BJ (cell line): ENCODE measurements at regions of chr1 and their contacts with region 1.

Region 1: GRCh38 chr1:47424336-47424982 is 8.4 kb downstream of the FOXE3 start:
- DNase-seq: no peak
- H3K4me3 ChIP-seq: no peak overlapping the region
- H3K27me3 ChIP-seq: no peaks in the 10 kb centered on the region
- CTCF ChIP-seq: peak; percentile 90

Region 2: DNA sequence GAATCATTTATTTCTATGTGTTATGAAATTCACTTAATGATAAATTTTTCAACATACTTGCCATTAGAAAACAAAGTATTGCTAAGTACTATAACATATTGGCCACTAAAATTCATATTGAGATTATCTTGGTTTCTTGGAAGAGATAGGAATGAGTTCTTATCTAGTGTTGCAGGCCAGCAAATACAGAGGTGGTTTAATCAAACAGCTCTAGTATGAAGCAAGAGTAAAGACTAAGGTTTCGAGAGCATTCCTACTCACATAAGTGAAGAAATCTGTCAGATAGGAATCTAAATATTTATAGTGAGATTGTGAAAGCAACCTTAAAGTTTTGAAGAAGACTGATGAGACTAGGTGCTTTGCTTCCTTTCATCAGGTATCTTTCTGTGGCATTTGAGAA is 46.3 kb before region 1 on chr1:
- CTCF ChIA-PET with region 1: interaction called, 10 read pairs
- POLR2A ChIA-PET with region 1: no interaction called
- DNase-seq: no peak
- H3K4me3 ChIP-seq: no peak overlapping the region
- H3K27me3 ChIP-seq: no peaks in the 10 kb centered on the region
- CTCF ChIP-seq: no peak

Region 3: GRCh38 chr1:47409311-47410070 is 15.0 kb before region 1 on chr1:
- CTCF ChIA-PET with region 1: interaction called, 19 read pairs
- POLR2A ChIA-PET with region 1: no interaction called
- DNase-seq: peak; percentile 71
- H3K4me3 ChIP-seq: no peak overlapping the region
- H3K27me3 ChIP-seq: no peaks in the 10 kb centered on the region
- CTCF ChIP-seq: no peak

Region 4: GRCh38 chr1:47444562-47445465 is 20.4 kb after region 1 on chr1:
- CTCF ChIA-PET with region 1: no interaction called
- POLR2A ChIA-PET with region 1: no interaction called
- DNase-seq: no peak
- H3K4me3 ChIP-seq: no peak overlapping the region
- H3K27me3 ChIP-seq: peaks cover 31% of the 10 kb centered on the region
- CTCF ChIP-seq: no peak